ENCODE measurements at regions of chr3 and their contacts with region 1.

Region 1: DNA sequence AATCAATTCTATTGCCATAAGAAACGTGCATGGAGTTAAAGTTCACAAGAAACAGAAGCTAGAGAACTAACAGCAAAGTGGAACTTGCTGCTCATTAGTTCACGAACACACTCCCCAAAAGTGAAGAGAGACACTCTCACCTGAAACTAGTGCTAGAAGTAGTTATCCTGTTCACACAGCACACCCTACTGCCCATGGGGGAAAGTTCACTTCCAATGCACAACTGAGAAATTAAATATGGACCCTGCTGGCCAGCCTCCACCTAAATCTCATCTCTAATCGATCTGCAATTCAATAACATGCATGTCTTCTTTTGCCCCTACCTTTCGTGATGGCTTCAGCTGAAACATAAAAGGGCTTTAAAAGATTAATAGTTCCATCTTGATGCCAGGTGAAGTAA is 39.4 kb upstream of the FRMD4B start:
- DNase-seq: peak; percentile 58 to 76 (median 74)
- H3K4me3 ChIP-seq: no peak overlapping the region
- H3K27ac ChIP-seq: no peak overlapping the region
- H3K4me1 ChIP-seq: no peaks in the 10 kb centered on the region
- H3K27me3 ChIP-seq: no peaks in the 10 kb centered on the region

Region 2: GRCh38 chr3:68988740-68989139 is 436.5 kb before region 1 on chr3:
- CTCF ChIA-PET with region 1: no interaction called
- POLR2A ChIA-PET with region 1: no interaction called
- DNase-seq: no peak
- H3K4me3 ChIP-seq: no peak overlapping the region
- H3K27ac ChIP-seq: no peak overlapping the region
- H3K4me1 ChIP-seq: no peaks in the 10 kb centered on the region
- H3K27me3 ChIP-seq: no peaks in the 10 kb centered on the region

Region 3: GRCh38 chr3:69161587-69162307 is 263.5 kb before region 1 on chr3:
- CTCF ChIA-PET with region 1: interaction called, 98 read pairs
- POLR2A ChIA-PET with region 1: no interaction called
- DNase-seq: peak; percentile 49 to 73 (median 65)
- H3K4me3 ChIP-seq: no peak overlapping the region
- H3K27ac ChIP-seq: no peak overlapping the region
- H3K4me1 ChIP-seq: no peaks in the 10 kb centered on the region
- H3K27me3 ChIP-seq: no peaks in the 10 kb centered on the region

Region 4: GRCh38 chr3:69306239-69307185 is 118.7 kb before region 1 on chr3:
- CTCF ChIA-PET with region 1: interaction called, 115 read pairs
- POLR2A ChIA-PET with region 1: no interaction called
- DNase-seq: peak; percentile 73 to 87 (median 85)
- H3K4me3 ChIP-seq: no peak overlapping the region
- H3K27ac ChIP-seq: no peak overlapping the region
- H3K4me1 ChIP-seq: peaks cover 0 to 3% (median 0%) of the 10 kb centered on the region in 4 experiments
- H3K27me3 ChIP-seq: no peaks in the 10 kb centered on the region

Region 5: DNA sequence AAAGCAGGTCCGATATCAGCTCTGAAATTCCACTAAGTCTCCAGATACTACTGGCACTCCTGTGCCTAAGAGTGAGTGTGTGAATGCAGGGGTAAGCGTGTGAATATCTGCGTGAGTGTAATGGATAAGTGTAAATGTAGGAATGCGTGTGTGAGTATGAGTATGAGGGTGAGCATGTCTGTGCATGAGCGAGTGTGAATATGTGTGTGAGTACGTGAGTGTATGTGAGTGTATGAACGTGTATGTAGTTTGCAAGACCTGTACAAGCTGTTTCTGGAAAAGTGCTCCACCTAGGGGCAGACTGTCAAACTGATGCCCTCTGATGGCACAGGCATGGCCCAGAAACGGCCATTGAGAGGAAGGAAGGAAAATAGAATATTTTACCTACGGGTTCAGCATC is 15.0 kb before region 1 on chr3:
- CTCF ChIA-PET with region 1: interaction called, 67 read pairs
- POLR2A ChIA-PET with region 1: no interaction called
- DNase-seq: peak; percentile 81 to 89 (median 86)
- H3K4me3 ChIP-seq: peak overlapping the region in 1 of 7 experiments; percentile 14
- H3K27ac ChIP-seq: no peak overlapping the region
- H3K4me1 ChIP-seq: peaks cover 0 to 14% (median 7%) of the 10 kb centered on the region in 4 experiments
- H3K27me3 ChIP-seq: no peaks in the 10 kb centered on the region

Region 6: DNA sequence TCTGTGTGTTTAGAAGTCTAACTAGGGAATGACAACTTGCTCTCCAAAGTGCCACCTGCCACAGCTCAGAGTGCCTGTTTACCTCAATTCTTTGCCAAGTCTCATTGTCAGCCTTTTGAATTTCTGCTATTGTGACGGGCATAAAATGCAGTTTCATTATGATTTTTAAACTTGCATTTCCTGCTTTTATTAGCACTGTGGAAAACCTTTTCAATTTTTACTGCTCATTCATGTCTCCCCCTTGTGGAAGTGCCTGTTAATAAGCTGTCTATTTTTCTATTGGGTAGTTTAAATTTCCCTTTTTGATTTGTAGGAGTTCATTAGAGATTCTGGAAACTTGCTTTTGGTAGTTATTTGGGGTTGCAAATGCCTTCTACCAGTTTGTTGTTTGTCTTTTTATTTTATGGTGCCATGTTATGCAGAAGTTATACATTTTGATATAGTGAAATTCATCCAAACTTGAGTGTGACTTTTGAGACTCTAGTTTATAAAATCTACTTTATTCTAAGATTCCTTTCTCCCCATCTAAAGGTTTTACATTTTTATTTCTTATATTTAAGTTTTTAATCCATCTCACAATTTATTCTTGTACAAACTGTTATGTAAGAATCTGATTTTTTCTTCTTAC is 14.5 kb after region 1 on chr3:
- CTCF ChIA-PET with region 1: interaction called, 14 read pairs
- POLR2A ChIA-PET with region 1: no interaction called
- DNase-seq: peak; percentile 47 to 75 (median 71)
- H3K4me3 ChIP-seq: peak overlapping the region in 3 of 7 experiments; percentile 41 to 59 (median 52)
- H3K27ac ChIP-seq: no peak overlapping the region
- H3K4me1 ChIP-seq: peaks cover 0 to 10% (median 6%) of the 10 kb centered on the region in 4 experiments
- H3K27me3 ChIP-seq: no peaks in the 10 kb centered on the region

Region 7: DNA sequence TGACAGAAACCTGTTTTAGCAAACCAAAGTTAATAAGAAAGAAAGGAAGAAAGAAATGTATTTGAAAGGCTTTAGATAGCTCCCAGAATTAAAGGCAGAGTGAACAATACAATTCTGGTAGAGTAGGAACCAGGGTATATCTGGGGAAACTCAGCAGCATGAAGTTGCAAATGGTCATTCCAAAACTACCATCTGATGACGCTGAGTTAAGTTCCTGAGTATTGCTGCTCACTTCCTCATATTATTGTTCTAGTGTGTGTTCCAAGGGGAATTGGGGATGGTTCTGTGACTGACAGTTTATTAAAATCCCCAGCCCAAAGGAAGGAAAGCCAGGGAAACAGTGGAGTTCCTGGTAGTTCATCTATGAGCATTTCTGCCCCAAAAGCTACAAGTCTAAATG is 48.9 kb after region 1 on chr3:
- CTCF ChIA-PET with region 1: no interaction called
- POLR2A ChIA-PET with region 1: no interaction called
- DNase-seq: no peak
- H3K4me3 ChIP-seq: no peak overlapping the region
- H3K27ac ChIP-seq: no peak overlapping the region
- H3K4me1 ChIP-seq: no peaks in the 10 kb centered on the region
- H3K27me3 ChIP-seq: no peaks in the 10 kb centered on the region

Measured in common myeloid progenitor, CD34-positive (primary cell).